ENCODE measurements at regions of chr2 and their contacts with region 1.

Region 1: GRCh38 chr2:74334931-74335333 is 8.3 kb downstream of the SLC4A5 start:
- DNase-seq: peak; percentile 75
- H3K4me3 Mint-ChIP-seq: no peak overlapping the region
- H3K27ac Mint-ChIP-seq: no peak overlapping the region
- H3K4me1 Mint-ChIP-seq: no peaks in the 10 kb centered on the region
- H3K27me3 Mint-ChIP-seq: peaks cover 7% of the 10 kb centered on the region
- CTCF ChIP-seq: peak; percentile 88

Region 2: DNA sequence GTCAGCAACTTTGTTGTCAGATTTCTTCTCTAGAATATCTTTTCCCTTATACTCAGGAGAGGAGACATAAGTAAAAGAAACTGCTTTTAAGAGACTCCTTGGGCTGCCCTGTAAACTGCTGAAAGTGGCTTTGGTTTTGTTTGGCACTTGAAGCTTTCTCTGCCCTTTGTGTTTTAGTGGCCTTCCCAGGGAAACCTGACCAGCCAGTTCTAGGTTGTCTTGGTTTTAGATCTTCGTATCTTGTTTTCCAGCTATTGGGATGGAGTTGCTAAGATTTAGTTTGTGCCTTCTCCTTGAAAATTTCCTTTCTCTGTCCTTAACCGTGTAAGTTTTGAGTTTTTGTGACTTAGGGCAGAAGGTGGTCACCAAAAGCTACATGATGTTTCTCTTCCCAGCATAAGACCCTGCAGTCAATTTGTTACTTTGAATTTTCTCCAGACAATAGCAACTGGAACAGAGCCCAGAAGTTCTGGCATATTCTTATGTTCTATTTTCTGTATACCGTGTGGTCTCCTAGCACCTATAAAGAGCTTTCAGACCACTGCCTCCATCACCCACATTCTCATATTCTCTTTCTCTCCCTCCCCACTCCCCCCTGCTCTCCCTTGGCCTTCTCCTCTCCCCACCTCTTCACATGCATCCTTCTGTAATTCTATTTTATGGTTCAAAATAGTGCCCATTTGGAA is 268.3 kb before region 1 on chr2:
- CTCF ChIA-PET with region 1: no interaction called
- POLR2A ChIA-PET with region 1: no interaction called
- intact Hi-C with region 1: no loop called
- DNase-seq: no peak
- H3K4me3 Mint-ChIP-seq: no peak overlapping the region
- H3K27ac Mint-ChIP-seq: no peak overlapping the region
- H3K4me1 Mint-ChIP-seq: peaks cover 9% of the 10 kb centered on the region
- H3K27me3 Mint-ChIP-seq: no peaks in the 10 kb centered on the region
- CTCF ChIP-seq: no peak

Region 3: DNA sequence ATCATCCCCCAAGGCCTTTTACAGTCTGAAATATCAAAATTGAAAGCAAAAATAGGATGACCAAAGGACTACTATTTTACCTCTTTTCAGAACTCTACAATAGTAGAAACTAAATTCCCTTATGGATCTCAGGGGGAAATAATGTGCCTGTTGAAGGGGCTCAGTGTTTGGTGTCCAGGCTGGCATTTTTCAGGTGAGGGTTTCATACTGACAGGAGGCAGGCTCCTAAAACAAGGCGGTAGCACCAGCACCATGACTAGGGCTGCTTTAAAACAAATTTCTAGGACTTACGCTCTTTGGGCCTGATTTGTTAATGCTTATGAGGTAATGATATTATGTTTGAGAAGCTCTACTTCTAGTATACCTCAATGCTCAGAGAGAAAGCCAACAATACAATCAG is 182.0 kb before region 1 on chr2:
- CTCF ChIA-PET with region 1: interaction called, 11 read pairs
- POLR2A ChIA-PET with region 1: no interaction called
- intact Hi-C with region 1: no loop called
- DNase-seq: no peak
- H3K4me3 Mint-ChIP-seq: no peak overlapping the region
- H3K27ac Mint-ChIP-seq: no peak overlapping the region
- H3K4me1 Mint-ChIP-seq: no peaks in the 10 kb centered on the region
- H3K27me3 Mint-ChIP-seq: no peaks in the 10 kb centered on the region
- CTCF ChIP-seq: no peak

Region 4: GRCh38 chr2:74250189-74250631 is 84.7 kb before region 1 on chr2:
- CTCF ChIA-PET with region 1: interaction called, 25 read pairs
- POLR2A ChIA-PET with region 1: interaction called, 3 read pairs
- intact Hi-C with region 1: loop called (anchors 1 kb)
- DNase-seq: peak; percentile 49
- H3K4me3 Mint-ChIP-seq: no peak overlapping the region
- H3K27ac Mint-ChIP-seq: no peak overlapping the region
- H3K4me1 Mint-ChIP-seq: peaks cover 5% of the 10 kb centered on the region
- H3K27me3 Mint-ChIP-seq: peaks cover 11% of the 10 kb centered on the region
- CTCF ChIP-seq: peak; percentile 70

Region 5: GRCh38 chr2:74307720-74308119 is 27.2 kb before region 1 on chr2:
- CTCF ChIA-PET with region 1: interaction called, 17 read pairs
- POLR2A ChIA-PET with region 1: no interaction called
- intact Hi-C with region 1: no loop called
- DNase-seq: no peak
- H3K4me3 Mint-ChIP-seq: no peak overlapping the region
- H3K27ac Mint-ChIP-seq: no peak overlapping the region
- H3K4me1 Mint-ChIP-seq: no peaks in the 10 kb centered on the region
- H3K27me3 Mint-ChIP-seq: peaks cover 30% of the 10 kb centered on the region
- CTCF ChIP-seq: no peak

Region 6: DNA sequence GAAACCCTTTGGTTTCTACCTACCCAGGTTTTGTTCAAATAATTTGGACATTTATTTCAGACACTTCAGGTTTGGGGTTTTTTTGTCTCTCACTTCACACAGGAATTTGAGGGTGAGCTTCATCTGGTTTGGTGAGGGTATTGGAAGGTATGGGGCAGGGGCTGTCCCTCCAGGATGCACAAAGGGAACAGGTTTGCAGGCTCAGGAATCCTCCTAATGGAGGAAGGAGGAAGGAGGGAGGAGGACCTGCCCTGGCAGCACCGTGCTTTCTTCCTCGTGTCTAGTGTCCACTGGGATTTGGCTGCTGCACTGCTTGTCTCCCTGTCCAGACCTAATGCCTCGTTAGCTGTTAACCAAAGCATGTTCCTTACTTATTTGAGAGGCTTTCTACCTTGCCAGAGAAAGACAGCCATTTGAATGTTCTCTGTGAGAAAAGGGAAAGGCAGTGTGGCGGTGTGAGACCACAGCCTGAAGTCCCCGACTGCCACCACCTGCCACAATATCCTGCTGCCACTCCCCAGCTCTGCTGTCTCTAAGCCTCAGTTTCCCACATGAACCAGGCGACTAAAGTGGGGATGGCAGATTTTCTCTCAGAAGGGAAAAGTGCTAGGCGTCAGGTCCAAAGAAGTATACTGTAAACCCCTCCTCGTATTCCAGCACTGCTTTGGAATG is 10.5 kb after region 1 on chr2:
- CTCF ChIA-PET with region 1: interaction called, 56 read pairs
- POLR2A ChIA-PET with region 1: interaction called, 6 read pairs
- intact Hi-C with region 1: no loop called
- DNase-seq: no peak
- H3K4me3 Mint-ChIP-seq: no peak overlapping the region
- H3K27ac Mint-ChIP-seq: no peak overlapping the region
- H3K4me1 Mint-ChIP-seq: no peaks in the 10 kb centered on the region
- H3K27me3 Mint-ChIP-seq: peaks cover 3% of the 10 kb centered on the region
- CTCF ChIP-seq: no peak

Region 7: DNA sequence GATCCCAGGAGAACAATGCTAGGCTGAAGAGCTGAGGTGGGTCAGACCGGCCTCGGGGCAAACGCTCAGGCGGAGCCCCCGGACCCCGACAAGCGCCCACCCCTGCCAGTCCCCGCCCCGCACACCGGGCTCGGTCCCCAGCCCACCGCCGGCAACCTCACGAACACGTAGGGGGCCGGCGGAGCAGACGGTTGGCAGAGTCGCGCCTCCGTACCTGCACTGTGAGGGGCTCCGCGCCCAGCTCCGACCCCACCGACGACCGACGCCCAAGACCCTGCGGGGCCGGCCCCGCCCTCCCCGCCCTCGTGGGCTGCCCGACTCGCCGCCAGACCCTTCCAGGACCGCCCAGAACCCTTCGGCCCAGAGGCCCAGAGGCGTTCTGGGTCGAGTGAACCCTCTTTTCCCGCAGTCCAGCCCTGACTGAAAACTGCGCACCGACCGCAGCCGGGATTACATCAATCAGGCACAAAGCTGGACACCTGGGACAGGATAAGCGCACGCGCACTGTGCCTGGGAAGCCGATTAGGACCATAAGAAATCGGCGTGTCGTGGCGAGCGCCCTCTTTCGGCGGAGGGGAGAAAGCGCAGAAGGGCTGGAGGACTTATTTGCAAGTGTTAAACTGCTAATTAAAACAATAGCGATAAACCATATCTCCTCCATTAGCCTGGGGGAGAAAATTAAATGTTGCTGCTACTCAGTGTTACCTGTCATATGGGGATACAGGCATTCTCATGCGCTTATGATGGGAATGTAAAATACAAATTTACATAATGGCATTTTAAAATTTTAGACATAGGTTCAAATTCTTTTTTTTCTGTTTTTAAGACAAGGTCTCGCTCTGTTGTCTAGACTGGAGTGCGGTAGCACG is 56.9 kb after region 1 on chr2:
- CTCF ChIA-PET with region 1: interaction called, 8 read pairs
- POLR2A ChIA-PET with region 1: no interaction called
- intact Hi-C with region 1: loop called (anchors 2 kb)
- DNase-seq: peak; percentile 94
- H3K4me3 Mint-ChIP-seq: peak overlapping the region; percentile 79
- H3K27ac Mint-ChIP-seq: peak overlapping the region; percentile 91
- H3K4me1 Mint-ChIP-seq: no peaks in the 10 kb centered on the region
- H3K27me3 Mint-ChIP-seq: no peaks in the 10 kb centered on the region
- CTCF ChIP-seq: peak; percentile 91

Region 8: GRCh38 chr2:74619651-74620297 is 284.8 kb after region 1 on chr2:
- CTCF ChIA-PET with region 1: no interaction called
- POLR2A ChIA-PET with region 1: no interaction called
- intact Hi-C with region 1: no loop called
- DNase-seq: no peak
- H3K4me3 Mint-ChIP-seq: no peak overlapping the region
- H3K27ac Mint-ChIP-seq: no peak overlapping the region
- H3K4me1 Mint-ChIP-seq: no peaks in the 10 kb centered on the region
- H3K27me3 Mint-ChIP-seq: peaks cover 42% of the 10 kb centered on the region
- CTCF ChIP-seq: no peak

Region 9: DNA sequence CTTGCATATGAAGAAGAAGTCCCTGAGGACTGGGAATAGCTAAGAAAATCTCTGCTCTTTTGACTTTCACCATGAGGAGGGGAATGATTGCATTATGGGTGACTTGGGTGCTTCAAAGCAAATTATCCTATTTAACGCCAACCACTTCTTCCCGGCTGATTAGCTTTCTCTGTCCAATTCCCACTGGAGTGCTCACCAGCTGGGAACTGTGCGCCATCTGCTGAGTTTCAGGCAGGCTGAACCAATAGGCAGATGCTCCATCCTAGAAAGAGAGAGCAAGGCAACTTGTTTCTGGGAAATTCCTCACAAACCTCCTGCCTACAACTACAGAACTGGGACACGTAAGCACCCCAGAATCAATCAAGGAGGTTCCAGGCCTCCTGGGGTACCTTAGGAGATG is 672.9 kb after region 1 on chr2:
- CTCF ChIA-PET with region 1: no interaction called
- POLR2A ChIA-PET with region 1: no interaction called
- intact Hi-C with region 1: no loop called
- DNase-seq: no peak
- H3K4me3 Mint-ChIP-seq: no peak overlapping the region
- H3K27ac Mint-ChIP-seq: no peak overlapping the region
- H3K4me1 Mint-ChIP-seq: no peaks in the 10 kb centered on the region
- H3K27me3 Mint-ChIP-seq: no peaks in the 10 kb centered on the region
- CTCF ChIP-seq: no peak

Measured in MCF 10A (cell line).